Naive thymus-derived CD4-positive, alpha-beta T cell (primary cell): ENCODE measurements at regions of chr17 and their contacts with region 1.

Region 1: GRCh38 chr17:21457051-21458026 is 81.2 kb downstream of the KCNJ12 start:
- DNase-seq: peak; percentile 85 to 97 (median 90)
- ATAC-seq: peak; percentile 97
- H3K4me3 ChIP-seq: no peak overlapping the region
- H3K4me3 Mint-ChIP-seq: peak overlapping the region in 7 of 10 donors; percentile 27 to 71 (median 43)
- H3K27ac ChIP-seq: peak overlapping the region; percentile 19
- H3K27ac Mint-ChIP-seq: peak overlapping the region in 7 of 9 donors; percentile 36 to 82 (median 73)
- H3K4me1 ChIP-seq: peaks cover 0 to 6% of the 10 kb centered on the region in 2 donors
- H3K4me1 Mint-ChIP-seq: peaks cover 10 to 25% (median 18%) of the 10 kb centered on the region in 7 donors
- H3K27me3 ChIP-seq: no peaks in the 10 kb centered on the region
- H3K27me3 Mint-ChIP-seq: peaks cover 0 to 37% (median 0%) of the 10 kb centered on the region in 5 donors

Region 2: DNA sequence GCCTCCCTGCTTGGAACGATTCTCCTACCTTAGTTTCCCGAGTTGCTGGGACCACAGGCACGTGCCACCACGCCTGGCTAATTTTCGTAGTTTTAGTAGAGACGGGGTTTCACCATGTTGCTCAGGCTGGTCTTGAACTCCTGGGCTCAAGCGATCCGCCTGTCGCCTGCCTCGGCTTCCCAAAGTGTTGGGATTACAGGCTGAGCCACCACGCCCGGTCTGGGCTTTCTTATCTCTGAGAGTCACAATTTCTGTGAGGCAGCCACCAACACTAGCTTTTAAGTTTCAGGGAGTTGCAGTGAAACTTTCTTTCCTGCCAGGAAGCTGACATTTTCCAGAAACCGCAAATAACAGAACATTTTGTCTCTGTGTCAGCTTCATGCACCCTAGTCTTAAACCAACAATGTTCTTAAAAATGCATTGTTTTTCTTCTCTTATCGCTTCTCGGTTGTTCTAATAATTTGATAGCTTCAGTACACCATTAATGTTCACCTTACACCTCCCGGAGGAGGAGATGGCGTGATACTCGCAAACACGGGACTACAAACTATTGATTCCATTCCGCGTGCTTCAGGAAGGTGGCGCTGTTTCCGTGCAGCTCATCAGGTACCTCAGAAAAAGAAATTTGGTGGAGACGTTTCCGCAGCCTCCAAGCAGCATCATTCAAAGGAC is 338.0 kb before region 1 on chr17:
- CTCF ChIA-PET with region 1: interaction called, 3 read pairs
- POLR2A ChIA-PET with region 1: no interaction called
- intact Hi-C with region 1: loop called in 1 of 2 experiments (anchors 2 kb)
- DNase-seq: peak; percentile 36 to 76 (median 62)
- ATAC-seq: peak; percentile 91
- H3K4me3 ChIP-seq: no peak overlapping the region
- H3K4me3 Mint-ChIP-seq: peak overlapping the region in 7 of 10 donors; percentile 1 to 72 (median 40)
- H3K27ac ChIP-seq: no peak overlapping the region
- H3K27ac Mint-ChIP-seq: peak overlapping the region in 3 of 9 donors; percentile 6 to 47 (median 35)
- H3K4me1 ChIP-seq: peaks cover 0 to 5% of the 10 kb centered on the region in 2 donors
- H3K4me1 Mint-ChIP-seq: peaks cover 6 to 15% (median 10%) of the 10 kb centered on the region in 7 donors
- H3K27me3 ChIP-seq: no peaks in the 10 kb centered on the region
- H3K27me3 Mint-ChIP-seq: peaks cover 0 to 16% (median 5%) of the 10 kb centered on the region in 5 donors

Region 3: DNA sequence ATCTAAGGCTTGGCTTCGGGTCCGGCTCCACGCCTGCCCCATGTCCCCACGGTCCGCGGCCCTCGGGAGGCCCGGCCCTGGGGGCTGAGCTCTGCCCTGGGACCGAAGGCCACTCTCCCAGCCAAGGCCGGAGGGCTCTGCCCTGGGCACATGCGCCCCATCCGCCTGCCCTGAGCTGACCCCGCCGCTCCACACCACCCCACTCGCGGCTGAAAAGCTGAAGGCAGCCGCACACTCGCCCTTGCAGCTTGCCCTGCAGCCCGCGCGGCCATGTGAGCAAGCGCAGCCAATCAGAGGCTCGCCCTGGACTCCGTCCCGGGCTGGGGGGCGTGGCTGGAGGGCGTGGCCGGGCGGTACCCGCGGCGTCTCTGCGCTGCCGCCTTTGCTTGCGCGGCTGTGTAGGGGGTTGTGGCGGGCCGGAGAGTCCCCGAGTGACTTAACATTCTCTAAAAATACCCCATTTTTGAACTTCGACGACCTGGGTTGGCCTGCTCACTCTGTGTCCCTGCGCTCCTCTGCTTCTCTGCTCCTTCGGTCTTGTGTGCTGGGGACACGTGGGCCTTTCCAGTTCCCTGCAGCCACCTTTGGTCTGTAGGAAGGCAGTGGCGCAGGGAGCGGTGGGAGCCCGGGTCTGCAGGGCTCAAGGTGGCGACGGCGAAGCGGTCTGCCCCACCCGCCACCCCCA is 181.6 kb before region 1 on chr17:
- CTCF ChIA-PET with region 1: no interaction called
- POLR2A ChIA-PET with region 1: no interaction called
- intact Hi-C with region 1: loop called in 1 of 2 experiments (anchors 1 kb)
- DNase-seq: peak; percentile 78 to 99 (median 86)
- ATAC-seq: peak; percentile 93
- H3K4me3 ChIP-seq: peak overlapping the region; percentile 71
- H3K4me3 Mint-ChIP-seq: peak overlapping the region; percentile 80 to 99 (median 94)
- H3K27ac ChIP-seq: peak overlapping the region; percentile 91
- H3K27ac Mint-ChIP-seq: peak overlapping the region; percentile 73 to 96 (median 92)
- H3K4me1 ChIP-seq: peaks cover 24 to 40% of the 10 kb centered on the region in 2 donors
- H3K4me1 Mint-ChIP-seq: peaks cover 34 to 52% (median 49%) of the 10 kb centered on the region in 7 donors
- H3K27me3 ChIP-seq: no peaks in the 10 kb centered on the region
- H3K27me3 Mint-ChIP-seq: no peaks in the 10 kb centered on the region

Region 4: DNA sequence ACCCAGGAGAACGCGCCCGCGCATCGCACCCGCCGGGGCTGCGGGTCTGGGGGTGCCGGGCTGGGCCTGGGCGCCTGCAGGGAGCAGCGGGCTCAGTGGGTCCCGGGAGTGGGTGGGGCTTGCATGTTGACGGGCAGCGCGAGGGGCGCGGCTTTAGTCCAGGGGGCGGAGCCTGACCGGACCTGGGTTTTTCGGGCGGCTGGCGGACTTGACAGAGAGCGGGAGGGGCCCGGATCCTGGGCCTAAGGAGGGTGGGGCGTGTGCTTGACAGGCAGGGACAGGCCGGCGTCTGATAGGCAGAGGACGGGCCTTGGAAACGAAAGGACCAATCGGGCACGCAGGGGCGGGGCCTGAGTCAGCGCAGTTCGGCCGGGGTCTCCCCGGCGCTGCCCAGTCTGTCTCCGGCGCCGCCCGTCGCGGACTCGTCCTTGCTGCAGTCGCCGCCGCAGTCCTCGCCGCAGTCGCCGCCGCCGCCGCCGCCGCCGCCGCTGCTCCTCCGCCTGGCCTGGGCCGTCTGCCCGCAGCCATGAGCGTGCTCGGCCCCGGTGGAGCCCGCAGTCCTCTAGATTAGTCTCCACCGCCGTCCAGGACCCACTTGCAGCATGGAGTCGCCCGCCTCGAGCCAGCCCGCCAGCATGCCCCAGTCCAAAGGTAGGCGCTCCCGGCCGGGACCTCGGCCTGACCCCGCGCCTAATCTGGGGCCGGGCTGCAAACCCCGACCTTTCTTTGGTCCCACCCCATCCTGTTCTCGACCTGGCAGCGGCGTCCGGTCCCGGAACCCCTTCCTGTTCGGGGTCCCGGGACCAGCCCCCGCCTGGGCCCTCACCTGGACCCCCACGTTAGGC is 172.8 kb before region 1 on chr17 and contains the start of gene MAP2K3:
- CTCF ChIA-PET with region 1: no interaction called
- POLR2A ChIA-PET with region 1: no interaction called
- intact Hi-C with region 1: loop called (anchors 1 kb)
- DNase-seq: peak; percentile 79 to 98 (median 84)
- ATAC-seq: peak; percentile 78
- H3K4me3 ChIP-seq: peak within 1 kb of the TSS; percentile 90
- H3K4me3 Mint-ChIP-seq: peak within 1 kb of the TSS; percentile 88 to 99 (median 96)
- H3K27ac ChIP-seq: peak within 1 kb of the TSS; percentile 78
- H3K27ac Mint-ChIP-seq: peak within 1 kb of the TSS; percentile 88 to 97 (median 96)
- H3K4me1 ChIP-seq: peaks cover 39 to 40% of the 10 kb centered on the region in 2 donors
- H3K4me1 Mint-ChIP-seq: peaks cover 32 to 57% (median 52%) of the 10 kb centered on the region in 7 donors
- H3K27me3 ChIP-seq: no peaks in the 10 kb centered on the region
- H3K27me3 Mint-ChIP-seq: no peaks in the 10 kb centered on the region
- total RNA-seq, gene MAP2K3: 37.5 to 127 (median 39.2) TPM

Region 5: DNA sequence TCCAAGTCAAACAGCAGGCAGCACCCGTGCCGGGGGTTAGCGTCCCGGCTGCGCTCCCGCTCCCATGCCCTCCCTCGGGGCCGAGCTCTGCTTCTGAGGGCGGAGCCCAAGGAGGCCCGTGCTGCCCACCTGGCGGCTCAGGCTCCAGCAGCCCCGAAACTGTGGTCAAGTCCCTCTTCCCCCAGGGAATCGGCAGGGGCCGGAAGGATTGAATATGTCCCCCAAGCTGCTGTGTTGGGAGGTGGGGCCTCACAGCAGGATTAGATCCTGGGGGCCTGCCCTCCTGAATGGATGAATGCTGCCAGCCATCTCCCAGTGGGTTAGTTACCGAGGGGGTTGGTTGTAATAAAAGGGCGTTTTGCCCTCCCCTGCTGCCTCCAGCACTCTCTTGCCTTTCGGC is 138.9 kb before region 1 on chr17:
- CTCF ChIA-PET with region 1: no interaction called
- POLR2A ChIA-PET with region 1: no interaction called
- intact Hi-C with region 1: loop called (anchors 1 to 10 kb)
- DNase-seq: no peak
- ATAC-seq: no peak
- H3K4me3 ChIP-seq: no peak overlapping the region
- H3K4me3 Mint-ChIP-seq: no peak overlapping the region
- H3K27ac ChIP-seq: no peak overlapping the region
- H3K27ac Mint-ChIP-seq: no peak overlapping the region
- H3K4me1 ChIP-seq: no peaks in the 10 kb centered on the region
- H3K4me1 Mint-ChIP-seq: peaks cover 0 to 7% (median 6%) of the 10 kb centered on the region in 7 donors
- H3K27me3 ChIP-seq: no peaks in the 10 kb centered on the region
- H3K27me3 Mint-ChIP-seq: peaks cover 0 to 5% (median 5%) of the 10 kb centered on the region in 5 donors

Region 6: GRCh38 chr17:21419299-21420239 is 37.8 kb before region 1 on chr17:
- CTCF ChIA-PET with region 1: no interaction called
- POLR2A ChIA-PET with region 1: no interaction called
- intact Hi-C with region 1: loop called in 1 of 2 experiments (anchors 2 kb)
- DNase-seq: peak in 8 of 9 donors; percentile 29 to 90 (median 85)
- ATAC-seq: peak; percentile 88
- H3K4me3 ChIP-seq: peak overlapping the region; percentile 49
- H3K4me3 Mint-ChIP-seq: peak overlapping the region in 9 of 10 donors; percentile 85 to 96 (median 90)
- H3K27ac ChIP-seq: peak overlapping the region; percentile 83
- H3K27ac Mint-ChIP-seq: peak overlapping the region in 8 of 9 donors; percentile 86 to 100 (median 99)
- H3K4me1 ChIP-seq: peaks cover 0 to 28% of the 10 kb centered on the region in 2 donors
- H3K4me1 Mint-ChIP-seq: peaks cover 4 to 44% (median 26%) of the 10 kb centered on the region in 7 donors
- H3K27me3 ChIP-seq: no peaks in the 10 kb centered on the region
- H3K27me3 Mint-ChIP-seq: peaks cover 0 to 2% (median 0%) of the 10 kb centered on the region in 5 donors

Region 7: DNA sequence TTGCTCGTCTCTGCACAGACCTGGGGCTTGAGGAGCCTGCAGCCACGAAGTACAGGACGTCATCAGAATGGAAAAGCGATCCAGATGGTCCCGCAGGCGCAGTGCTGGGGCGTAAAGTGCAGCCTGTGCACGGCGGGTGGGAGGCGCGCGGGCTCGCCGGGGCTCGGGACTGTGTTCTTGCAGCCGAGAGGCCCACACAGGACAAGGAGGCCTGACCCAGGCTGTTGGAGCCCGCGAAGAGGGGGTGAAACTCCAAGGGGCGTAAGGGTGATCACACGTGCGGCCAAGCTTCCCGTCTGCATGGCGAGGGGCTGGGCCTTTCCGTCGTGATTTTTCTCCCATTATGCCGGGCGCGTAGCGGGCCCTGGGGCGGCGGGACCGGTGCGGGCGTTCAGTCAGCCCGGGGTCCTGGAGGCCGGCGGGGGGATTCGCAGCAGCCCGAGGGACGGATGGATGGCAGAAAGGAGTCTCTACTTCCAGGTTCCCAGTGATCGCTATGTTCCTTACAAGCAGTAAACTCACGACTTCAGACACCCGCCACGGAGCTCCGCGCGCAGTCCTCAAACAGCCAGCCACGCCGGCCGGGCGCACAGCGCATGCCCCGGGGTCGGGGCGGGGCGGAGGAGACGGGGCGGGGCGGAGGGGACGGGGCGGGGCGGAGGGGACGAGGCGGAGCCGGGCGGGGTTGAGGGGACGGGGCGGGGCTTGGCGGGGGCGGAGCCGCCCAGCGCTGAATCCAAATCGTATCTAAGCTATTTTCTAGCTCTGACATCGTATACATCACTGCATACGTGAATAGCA is 93.9 kb after region 1 on chr17:
- CTCF ChIA-PET with region 1: interaction called, 3 read pairs
- POLR2A ChIA-PET with region 1: no interaction called
- intact Hi-C with region 1: loop called (anchors 1 kb)
- DNase-seq: peak; percentile 68 to 89 (median 80)
- ATAC-seq: peak; percentile 96
- H3K4me3 ChIP-seq: peak overlapping the region; percentile 69
- H3K4me3 Mint-ChIP-seq: peak overlapping the region; percentile 78 to 91 (median 88)
- H3K27ac ChIP-seq: peak overlapping the region; percentile 69
- H3K27ac Mint-ChIP-seq: peak overlapping the region in 6 of 9 donors; percentile 16 to 66 (median 46)
- H3K4me1 ChIP-seq: peaks cover 0 to 10% of the 10 kb centered on the region in 2 donors
- H3K4me1 Mint-ChIP-seq: peaks cover 24 to 53% (median 41%) of the 10 kb centered on the region in 7 donors
- H3K27me3 ChIP-seq: no peaks in the 10 kb centered on the region
- H3K27me3 Mint-ChIP-seq: peaks cover 17 to 31% (median 27%) of the 10 kb centered on the region in 5 donors